Mammary epithelial cell (primary cell): ENCODE measurements at regions of chr1 and their contacts with region 1.

Region 1: DNA sequence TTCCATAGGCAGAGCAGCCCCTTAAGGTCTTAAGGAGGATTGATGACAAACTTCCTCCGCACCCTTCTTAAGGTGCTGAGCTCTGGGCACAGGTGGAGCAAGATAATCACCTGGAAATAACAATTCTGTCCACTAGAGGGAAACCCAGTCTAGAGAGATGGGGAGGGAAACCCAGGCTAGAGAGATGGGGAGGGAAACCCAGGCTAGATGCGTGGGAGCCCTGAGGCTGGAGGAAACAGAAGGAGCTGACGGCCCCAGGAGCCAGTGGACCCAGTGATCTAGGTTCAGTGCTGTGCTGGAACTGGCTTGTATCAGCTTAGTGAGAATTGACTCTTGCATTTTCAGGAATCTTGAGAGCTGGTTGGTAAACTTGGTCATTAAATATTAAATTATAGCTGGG is 17.8 kb upstream of the MYCL start:
- DNase-seq: peak; percentile 76
- H3K4me3 ChIP-seq: no peak overlapping the region
- H3K27ac ChIP-seq: no peak overlapping the region
- H3K4me1 ChIP-seq: no peaks in the 10 kb centered on the region
- H3K27me3 ChIP-seq: no peaks in the 10 kb centered on the region
- CTCF ChIP-seq: peak; percentile 71 to 84

Region 2: GRCh38 chr1:39816415-39817090 is 103.0 kb before region 1 on chr1:
- CTCF ChIA-PET with region 1: interaction called, 12 read pairs
- dilution Hi-C with region 1: no loop called
- in situ Hi-C with region 1: loop called in 1 of 2 experiments (anchors 25 kb)
- intact Hi-C with region 1: loop called (anchors 1 kb)
- DNase-seq: peak; percentile 60
- H3K4me3 ChIP-seq: no peak overlapping the region
- H3K27ac ChIP-seq: no peak overlapping the region
- H3K4me1 ChIP-seq: no peaks in the 10 kb centered on the region
- H3K27me3 ChIP-seq: no peaks in the 10 kb centered on the region
- CTCF ChIP-seq: peak; percentile 75 to 85

Region 3: GRCh38 chr1:39825432-39825951 is 94.1 kb before region 1 on chr1:
- CTCF ChIA-PET with region 1: interaction called, 21 read pairs
- dilution Hi-C with region 1: no loop called
- in situ Hi-C with region 1: loop called in 1 of 2 experiments (anchors 25 kb)
- intact Hi-C with region 1: no loop called
- DNase-seq: no peak
- H3K4me3 ChIP-seq: no peak overlapping the region
- H3K27ac ChIP-seq: no peak overlapping the region
- H3K4me1 ChIP-seq: no peaks in the 10 kb centered on the region
- H3K27me3 ChIP-seq: no peaks in the 10 kb centered on the region
- CTCF ChIP-seq: no peak

Region 4: DNA sequence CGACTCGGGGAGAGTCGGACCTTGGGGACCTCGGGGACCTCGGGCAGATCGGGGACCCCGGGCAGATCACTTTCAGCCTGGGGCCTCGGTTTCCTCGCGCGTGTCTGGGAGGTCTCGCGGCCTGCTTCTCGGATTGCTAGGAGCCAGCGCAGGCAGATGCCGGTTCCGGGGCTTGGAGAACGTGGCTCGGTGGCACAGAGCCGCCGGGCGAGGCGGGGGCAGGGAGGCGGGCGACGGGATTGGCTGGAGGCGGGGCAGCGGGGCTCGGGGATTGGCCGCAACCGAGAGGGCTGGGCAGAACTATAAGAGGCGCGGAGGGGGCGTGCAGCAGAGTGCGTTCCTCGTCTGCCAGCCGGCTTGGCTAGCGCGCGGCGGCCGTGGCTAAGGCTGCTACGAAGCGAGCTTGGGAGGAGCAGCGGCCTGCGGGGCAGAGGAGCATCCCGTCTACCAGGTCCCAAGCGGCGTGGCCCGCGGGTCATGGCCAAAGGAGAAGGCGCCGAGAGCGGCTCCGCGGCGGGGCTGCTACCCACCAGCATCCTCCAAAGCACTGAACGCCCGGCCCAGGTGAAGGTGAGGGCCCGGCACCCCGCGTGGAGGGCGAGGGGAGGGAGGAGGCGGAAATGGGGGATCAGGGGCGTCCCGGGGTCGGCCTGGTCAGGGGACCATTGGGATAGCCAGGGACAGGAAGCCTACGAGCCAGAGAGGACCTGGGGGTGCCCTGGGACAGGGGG is 35.4 kb after region 1 on chr1 and contains the start of gene MFSD2A:
- CTCF ChIA-PET with region 1: interaction called, 11 read pairs
- dilution Hi-C with region 1: no loop called
- in situ Hi-C with region 1: no loop called
- intact Hi-C with region 1: loop called (anchors 1 kb)
- DNase-seq: peak; percentile 92
- H3K4me3 ChIP-seq: peak within 1 kb of the TSS; percentile 74 to 78 (median 75)
- H3K27ac ChIP-seq: peak within 1 kb of the TSS; percentile 78
- H3K4me1 ChIP-seq: peaks cover 47% of the 10 kb centered on the region
- H3K27me3 ChIP-seq: no peaks in the 10 kb centered on the region
- CTCF ChIP-seq: no peak
- total RNA-seq, gene MFSD2A: 14.3 to 54.0 TPM

Region 5: GRCh38 chr1:39960431-39960958 is 41.0 kb after region 1 on chr1:
- CTCF ChIA-PET with region 1: interaction called, 11 read pairs
- dilution Hi-C with region 1: no loop called
- in situ Hi-C with region 1: no loop called
- intact Hi-C with region 1: loop called (anchors 1 kb)
- DNase-seq: peak; percentile 79
- H3K4me3 ChIP-seq: no peak overlapping the region
- H3K27ac ChIP-seq: no peak overlapping the region
- H3K4me1 ChIP-seq: peaks cover 39% of the 10 kb centered on the region
- H3K27me3 ChIP-seq: no peaks in the 10 kb centered on the region
- CTCF ChIP-seq: no peak

Region 6: DNA sequence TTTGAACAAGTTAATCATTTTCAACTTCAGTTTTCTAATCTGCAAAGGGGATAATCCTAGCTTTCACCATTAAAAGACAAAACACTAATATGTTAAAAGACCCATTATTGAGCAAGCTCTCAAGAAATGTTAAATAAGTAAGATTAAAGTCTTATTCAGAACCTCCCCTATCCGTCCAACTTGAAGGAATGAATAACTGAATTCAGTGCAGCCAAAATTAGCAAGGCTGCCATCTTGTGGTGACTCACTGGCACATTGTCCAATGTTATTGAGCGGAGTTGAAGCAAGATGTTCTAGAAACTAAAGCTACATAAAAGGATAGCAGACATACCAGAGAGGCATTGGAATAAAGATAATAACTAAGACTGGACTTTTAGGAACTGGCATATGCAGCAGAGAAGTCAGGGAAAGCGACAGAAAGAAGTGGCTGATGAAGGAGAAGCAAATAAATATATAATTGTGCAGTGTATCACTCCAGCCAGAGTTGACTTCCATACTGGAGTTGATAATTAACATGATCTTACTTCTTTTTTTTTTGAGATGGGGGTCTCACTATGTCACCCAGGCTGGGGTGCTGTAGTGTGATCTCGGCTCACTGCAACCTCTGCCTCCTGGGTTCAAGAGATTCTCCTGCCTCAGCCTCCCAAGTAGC is 112.8 kb after region 1 on chr1:
- CTCF ChIA-PET with region 1: interaction called, 3 read pairs
- dilution Hi-C with region 1: no loop called
- in situ Hi-C with region 1: loop called (anchors 5 to 10 kb)
- intact Hi-C with region 1: loop called (anchors 1 kb)
- DNase-seq: peak; percentile 60
- H3K4me3 ChIP-seq: no peak overlapping the region
- H3K27ac ChIP-seq: no peak overlapping the region
- H3K4me1 ChIP-seq: peaks cover 30% of the 10 kb centered on the region
- H3K27me3 ChIP-seq: no peaks in the 10 kb centered on the region
- CTCF ChIP-seq: peak; percentile 69 to 70

Region 7: DNA sequence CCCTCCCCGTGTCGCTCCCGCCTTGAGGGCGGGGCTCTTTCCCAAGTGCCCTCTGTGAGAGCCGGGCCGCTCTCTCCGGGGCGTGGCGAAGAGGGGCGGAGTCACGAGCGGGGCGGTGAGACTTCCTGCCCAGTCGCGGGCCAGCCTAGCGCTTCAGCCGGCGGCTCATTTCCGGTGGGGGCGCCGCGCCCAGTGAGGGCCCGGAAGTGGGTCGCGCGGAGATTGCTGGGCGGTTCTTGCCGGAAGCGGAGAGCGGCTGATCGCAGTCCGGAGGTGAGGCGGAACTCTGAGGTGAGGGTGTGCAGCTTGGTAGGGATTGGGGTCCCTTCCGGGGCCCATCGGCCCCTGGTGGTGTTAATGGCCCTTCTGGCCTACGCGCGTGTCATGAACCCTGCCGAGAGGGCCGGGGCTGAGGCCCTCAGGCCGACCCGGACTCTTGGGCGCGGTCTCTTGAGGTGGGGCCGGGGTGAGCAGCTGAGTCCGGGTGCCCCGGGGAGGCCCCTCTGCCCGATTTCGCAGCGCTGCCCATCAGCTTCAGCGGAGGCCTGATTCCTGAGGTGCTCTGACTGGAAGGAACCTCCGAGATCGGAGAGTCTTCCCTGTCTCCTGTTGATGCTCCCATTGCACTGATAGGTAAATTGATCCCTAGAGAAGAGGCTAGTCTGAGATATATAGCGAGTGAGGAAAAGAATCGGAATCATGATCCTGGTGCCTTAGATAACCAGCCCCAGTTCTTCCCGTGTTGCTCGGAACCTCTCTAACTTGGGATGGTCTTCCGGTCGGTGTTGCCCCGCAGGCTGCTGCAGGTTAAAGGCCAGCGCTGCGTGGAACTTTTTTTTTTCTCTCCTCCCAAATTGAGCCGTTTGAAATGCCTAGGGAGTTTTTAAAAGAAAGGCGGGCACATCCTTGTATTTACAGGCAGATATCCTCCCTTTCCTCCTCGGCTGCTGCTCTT is 121.2 kb after region 1 on chr1 and contains the start of gene CAP1:
- CTCF ChIA-PET with region 1: interaction called, 3 read pairs
- dilution Hi-C with region 1: no loop called
- in situ Hi-C with region 1: loop called (anchors 5 to 10 kb)
- intact Hi-C with region 1: no loop called
- DNase-seq: peak; percentile 99
- H3K4me3 ChIP-seq: peak within 1 kb of the TSS; percentile 93 to 98 (median 98)
- H3K27ac ChIP-seq: peak within 1 kb of the TSS; percentile 85
- H3K4me1 ChIP-seq: peaks cover 46% of the 10 kb centered on the region
- H3K27me3 ChIP-seq: no peaks in the 10 kb centered on the region
- CTCF ChIP-seq: no peak
- total RNA-seq, gene CAP1: 715 to 877 TPM